T-cell (primary cell): ENCODE measurements at regions of chr5 and their contacts with region 1.

Region 1: GRCh38 chr5:66828548-66829357 is 232.6 kb downstream of the MAST4 start:
- DNase-seq: peak; percentile 15 to 72 (median 47)
- ATAC-seq: peak; percentile 89 to 94 (median 92)
- H3K4me3 ChIP-seq: peak overlapping the region; percentile 43 to 66
- H3K4me3 Mint-ChIP-seq: peak overlapping the region; percentile 75 to 78 (median 78)
- H3K27ac ChIP-seq: peak overlapping the region; percentile 43
- H3K27ac Mint-ChIP-seq: peak overlapping the region; percentile 62 to 78
- H3K4me1 ChIP-seq: peaks cover 10 to 11% of the 10 kb centered on the region in 2 experiments
- H3K4me1 Mint-ChIP-seq: peaks cover 22 to 32% (median 32%) of the 10 kb centered on the region in 3 donors
- H3K27me3 ChIP-seq: peaks cover 5 to 8% of the 10 kb centered on the region in 2 experiments
- H3K27me3 Mint-ChIP-seq: peaks cover 13 to 25% of the 10 kb centered on the region in 2 donors

Region 2: GRCh38 chr5:65290677-65291076 is 1538.1 kb before region 1 on chr5:
- CTCF ChIA-PET with region 1: no interaction called
- POLR2A ChIA-PET with region 1: no interaction called
- DNase-seq: no peak
- ATAC-seq: no peak
- H3K4me3 ChIP-seq: no peak overlapping the region
- H3K4me3 Mint-ChIP-seq: no peak overlapping the region
- H3K27ac ChIP-seq: no peak overlapping the region
- H3K27ac Mint-ChIP-seq: no peak overlapping the region
- H3K4me1 ChIP-seq: no peaks in the 10 kb centered on the region
- H3K4me1 Mint-ChIP-seq: no peaks in the 10 kb centered on the region
- H3K27me3 ChIP-seq: no peaks in the 10 kb centered on the region
- H3K27me3 Mint-ChIP-seq: no peaks in the 10 kb centered on the region

Region 3: GRCh38 chr5:66666778-66667177 is 162.0 kb before region 1 on chr5:
- CTCF ChIA-PET with region 1: no interaction called
- POLR2A ChIA-PET with region 1: no interaction called
- DNase-seq: peak in 1 of 35 experiments; percentile 1
- ATAC-seq: no peak
- H3K4me3 ChIP-seq: no peak overlapping the region
- H3K4me3 Mint-ChIP-seq: no peak overlapping the region
- H3K27ac ChIP-seq: no peak overlapping the region
- H3K27ac Mint-ChIP-seq: no peak overlapping the region
- H3K4me1 ChIP-seq: no peaks in the 10 kb centered on the region
- H3K4me1 Mint-ChIP-seq: no peaks in the 10 kb centered on the region
- H3K27me3 ChIP-seq: peaks cover 0 to 3% of the 10 kb centered on the region in 2 experiments
- H3K27me3 Mint-ChIP-seq: peaks cover 19 to 24% of the 10 kb centered on the region in 2 donors

Region 4: GRCh38 chr5:66814146-66814991 is 14.4 kb before region 1 on chr5:
- CTCF ChIA-PET with region 1: interaction called, 6 to 12 read pairs
- POLR2A ChIA-PET with region 1: interaction called in 1 of 2 experiments, 3 read pairs
- DNase-seq: peak in 24 of 35 experiments; percentile 3 to 70 (median 31)
- ATAC-seq: peak; percentile 60 to 68 (median 63)
- H3K4me3 ChIP-seq: no peak overlapping the region
- H3K4me3 Mint-ChIP-seq: no peak overlapping the region
- H3K27ac ChIP-seq: no peak overlapping the region
- H3K27ac Mint-ChIP-seq: no peak overlapping the region
- H3K4me1 ChIP-seq: no peaks in the 10 kb centered on the region
- H3K4me1 Mint-ChIP-seq: peaks cover 0 to 2% (median 0%) of the 10 kb centered on the region in 3 donors
- H3K27me3 ChIP-seq: no peaks in the 10 kb centered on the region
- H3K27me3 Mint-ChIP-seq: peaks cover 0 to 2% of the 10 kb centered on the region in 2 donors